Activated CD4-positive, alpha-beta memory T cell treated with anti-CD3 and anti-CD28 coated beads for 36 hours (primary cell): ENCODE measurements at regions of chr9 and their contacts with region 1.

Region 1: GRCh38 chr9:76393963-76394679 is at the start of gene RFK:
- DNase-seq: peak; percentile 96
- H3K4me3 Mint-ChIP-seq: peak within 1 kb of the TSS; percentile 98
- H3K27ac Mint-ChIP-seq: peak within 1 kb of the TSS; percentile 93
- H3K4me1 Mint-ChIP-seq: peaks cover 33% of the 10 kb centered on the region
- H3K27me3 Mint-ChIP-seq: no peaks in the 10 kb centered on the region
- total RNA-seq, gene RFK: 7.4 to 7.7 TPM

Region 2: DNA sequence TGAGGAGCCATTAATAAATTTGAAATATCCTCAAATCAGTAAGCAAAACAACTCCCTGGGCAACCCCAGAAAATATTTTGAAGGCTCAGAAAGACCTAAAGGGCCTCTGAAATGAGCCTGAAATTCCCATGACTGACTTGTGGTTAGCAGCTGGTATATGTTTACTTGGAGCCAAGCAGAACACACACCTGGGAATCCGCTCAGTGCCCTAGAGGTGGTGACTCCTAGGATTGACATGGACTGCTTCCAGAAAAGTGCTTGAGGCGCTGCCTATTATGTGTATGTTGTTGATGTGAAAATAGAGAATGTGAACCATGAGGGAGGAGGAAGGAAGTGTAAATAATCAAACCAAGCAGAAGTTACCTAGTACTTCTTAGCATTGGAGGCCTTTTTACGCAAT is 14.6 kb before region 1 on chr9:
- CTCF ChIA-PET with region 1: interaction called, 11 read pairs
- POLR2A ChIA-PET with region 1: interaction called, 6 read pairs
- intact Hi-C with region 1: no loop called
- DNase-seq: no peak
- H3K4me3 Mint-ChIP-seq: no peak overlapping the region
- H3K27ac Mint-ChIP-seq: no peak overlapping the region
- H3K4me1 Mint-ChIP-seq: no peaks in the 10 kb centered on the region
- H3K27me3 Mint-ChIP-seq: no peaks in the 10 kb centered on the region

Region 3: DNA sequence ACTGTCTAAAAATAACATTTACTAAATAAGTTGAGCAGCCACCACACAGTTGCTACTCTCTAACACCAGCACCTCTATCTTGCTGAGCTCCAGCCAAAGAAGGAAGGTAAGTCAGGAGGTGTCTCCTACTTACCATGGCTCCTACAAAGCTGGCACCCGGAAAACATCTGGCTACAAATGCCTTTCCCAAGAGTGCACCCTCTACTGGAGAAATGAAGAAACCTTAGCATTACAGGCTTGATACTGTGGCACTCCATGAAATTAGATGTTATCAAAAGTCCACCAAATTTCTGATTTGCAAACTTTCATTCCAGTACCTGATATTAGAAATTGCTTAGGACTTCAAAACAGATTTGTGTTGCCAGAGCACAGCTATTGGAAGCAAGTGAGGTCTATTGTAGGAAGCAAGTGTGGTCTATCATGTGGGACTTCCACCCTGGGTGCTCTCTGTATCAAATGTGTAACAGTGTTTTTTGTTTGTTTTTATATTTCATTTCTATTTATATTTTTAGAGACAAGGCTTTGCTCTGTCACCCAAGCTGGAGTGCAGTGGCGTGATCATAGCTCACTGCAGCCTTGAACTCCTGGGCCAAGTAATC is 25.8 kb after region 1 on chr9:
- CTCF ChIA-PET with region 1: interaction called, 11 read pairs
- POLR2A ChIA-PET with region 1: interaction called, 4 read pairs
- intact Hi-C with region 1: no loop called
- DNase-seq: no peak
- H3K4me3 Mint-ChIP-seq: no peak overlapping the region
- H3K27ac Mint-ChIP-seq: no peak overlapping the region
- H3K4me1 Mint-ChIP-seq: peaks cover 34% of the 10 kb centered on the region
- H3K27me3 Mint-ChIP-seq: no peaks in the 10 kb centered on the region

Region 4: GRCh38 chr9:76458903-76459690 is 65.0 kb after region 1 on chr9 and contains the start of gene GCNT1:
- CTCF ChIA-PET with region 1: interaction called, 5 read pairs
- POLR2A ChIA-PET with region 1: interaction called, 11 read pairs
- intact Hi-C with region 1: loop called (anchors 1 kb)
- DNase-seq: peak; percentile 94
- H3K4me3 Mint-ChIP-seq: peak within 1 kb of the TSS; percentile 94
- H3K27ac Mint-ChIP-seq: peak within 1 kb of the TSS; percentile 49
- H3K4me1 Mint-ChIP-seq: peaks cover 18% of the 10 kb centered on the region
- H3K27me3 Mint-ChIP-seq: no peaks in the 10 kb centered on the region
- total RNA-seq, gene GCNT1: 6.7 to 6.9 TPM

Region 5: DNA sequence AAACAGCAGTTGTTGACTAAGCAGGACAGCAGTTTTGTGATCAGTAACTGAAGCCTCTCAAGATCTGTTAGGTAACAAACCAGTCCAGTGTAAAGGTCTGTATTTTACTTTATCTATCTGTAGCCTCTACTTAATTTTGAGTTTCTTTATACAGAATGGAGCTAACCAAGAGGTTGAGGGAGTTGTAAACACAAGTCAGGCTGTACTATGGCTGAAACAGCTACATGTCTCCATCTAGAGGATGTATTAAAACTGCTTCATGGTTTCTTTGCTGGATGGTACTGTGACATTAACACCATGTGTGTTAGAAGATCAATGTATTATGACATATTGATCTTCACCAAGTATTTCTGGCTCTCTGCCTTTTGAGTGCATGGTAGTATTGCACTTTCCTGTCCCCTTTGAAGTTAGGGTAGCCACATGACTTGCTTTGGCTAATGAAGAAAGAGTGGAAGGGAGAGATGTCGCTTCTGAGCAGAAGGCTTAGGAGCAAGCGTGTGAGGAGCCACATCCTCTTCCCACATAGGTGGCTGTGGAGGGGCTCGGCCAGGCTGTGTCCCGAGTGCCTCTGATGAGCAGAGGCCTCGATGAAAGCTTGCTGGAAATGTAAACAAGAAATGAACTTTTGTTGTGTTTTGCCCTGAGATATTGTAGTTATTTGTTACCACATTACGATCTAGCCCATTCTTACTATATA is 264.6 kb after region 1 on chr9:
- CTCF ChIA-PET with region 1: interaction called, 25 read pairs
- POLR2A ChIA-PET with region 1: no interaction called
- intact Hi-C with region 1: loop called (anchors 2 kb)
- DNase-seq: no peak
- H3K4me3 Mint-ChIP-seq: no peak overlapping the region
- H3K27ac Mint-ChIP-seq: no peak overlapping the region
- H3K4me1 Mint-ChIP-seq: peaks cover 29% of the 10 kb centered on the region
- H3K27me3 Mint-ChIP-seq: peaks cover 1% of the 10 kb centered on the region

Region 6: DNA sequence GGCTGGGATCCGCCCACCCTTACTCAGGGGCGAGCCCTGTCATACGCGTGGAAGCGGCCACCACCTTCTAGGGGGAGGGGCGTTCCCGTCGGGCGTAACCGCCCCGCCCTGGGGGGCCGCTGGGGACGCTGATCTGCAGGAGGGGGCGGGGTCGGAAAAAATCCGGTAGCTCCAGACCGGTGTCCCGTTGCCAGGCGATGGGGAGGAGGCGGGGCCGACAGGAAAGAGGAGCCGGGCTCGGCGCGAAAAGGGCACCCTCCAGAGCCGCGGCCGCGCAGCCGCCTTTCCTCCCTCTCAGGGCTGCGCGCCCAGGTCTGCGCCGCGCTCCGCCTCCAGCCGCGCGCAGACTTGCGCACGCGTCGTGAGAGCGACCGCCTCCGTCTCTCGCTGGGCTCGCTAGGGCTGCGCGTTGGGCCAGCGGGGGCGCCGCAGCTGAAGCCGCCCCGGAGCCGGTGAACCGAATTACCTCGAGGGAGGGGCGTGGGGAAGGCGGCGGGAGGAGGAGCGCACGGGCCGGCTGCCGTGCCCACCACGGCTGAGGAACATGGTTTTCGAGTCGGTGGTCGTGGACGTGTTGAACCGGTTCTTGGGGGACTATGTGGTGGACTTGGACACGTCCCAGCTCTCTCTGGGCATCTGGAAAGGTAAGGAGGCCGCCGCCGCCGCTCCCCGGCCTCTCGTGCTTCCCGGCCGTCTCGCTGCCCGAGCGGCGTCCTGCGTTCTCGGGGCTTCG is 783.2 kb after region 1 on chr9 and contains the start of gene VPS13A:
- CTCF ChIA-PET with region 1: no interaction called
- POLR2A ChIA-PET with region 1: no interaction called
- intact Hi-C with region 1: loop called (anchors 10 kb)
- DNase-seq: peak; percentile 97
- H3K4me3 Mint-ChIP-seq: peak within 1 kb of the TSS; percentile 86
- H3K27ac Mint-ChIP-seq: peak within 1 kb of the TSS; percentile 87
- H3K4me1 Mint-ChIP-seq: peaks cover 22% of the 10 kb centered on the region
- H3K27me3 Mint-ChIP-seq: no peaks in the 10 kb centered on the region
- total RNA-seq, gene VPS13A: 27.3 to 30.4 TPM